ENCODE measurements at regions of chr2 and their contacts with region 1.

Region 1: GRCh38 chr2:28250006-28250405 is 142.7 kb upstream of the FOSL2 start:
- DNase-seq: no peak
- H3K4me3 Mint-ChIP-seq: no peak overlapping the region
- H3K27ac Mint-ChIP-seq: no peak overlapping the region
- H3K4me1 Mint-ChIP-seq: peaks cover 64% of the 10 kb centered on the region
- H3K27me3 Mint-ChIP-seq: no peaks in the 10 kb centered on the region

Region 2: GRCh38 chr2:27723372-27724144 is 526.4 kb before region 1 on chr2:
- intact Hi-C with region 1: loop called (anchors 5 kb)
- DNase-seq: no peak
- H3K4me3 Mint-ChIP-seq: no peak overlapping the region
- H3K27ac Mint-ChIP-seq: no peak overlapping the region
- H3K4me1 Mint-ChIP-seq: peaks cover 40% of the 10 kb centered on the region
- H3K27me3 Mint-ChIP-seq: peaks cover 3% of the 10 kb centered on the region

Region 3: DNA sequence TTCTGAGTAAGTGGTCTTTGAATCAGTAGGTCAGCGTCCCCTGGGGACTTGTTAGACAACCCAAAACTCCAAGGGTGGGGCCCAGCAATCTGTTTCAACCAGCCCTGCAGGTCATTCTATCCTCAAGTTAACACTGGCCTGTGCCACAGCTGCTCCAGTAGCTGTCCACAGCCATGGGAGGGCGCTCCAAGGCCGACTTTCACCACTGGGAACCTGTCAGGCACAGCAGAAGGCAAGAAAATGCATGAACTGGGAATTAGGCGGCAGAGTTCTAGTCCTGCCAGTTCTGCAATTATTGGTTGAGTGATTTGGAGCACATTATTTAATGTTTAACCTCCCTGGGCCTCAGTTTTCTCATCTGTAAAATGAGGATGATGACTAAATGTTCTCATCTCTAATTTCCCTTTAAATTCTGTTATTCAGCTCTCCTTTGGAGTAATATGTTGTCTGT is 495.8 kb before region 1 on chr2:
- intact Hi-C with region 1: loop called (anchors 1 kb)
- DNase-seq: peak; percentile 62
- H3K4me3 Mint-ChIP-seq: no peak overlapping the region
- H3K27ac Mint-ChIP-seq: no peak overlapping the region
- H3K4me1 Mint-ChIP-seq: no peaks in the 10 kb centered on the region
- H3K27me3 Mint-ChIP-seq: peaks cover 4% of the 10 kb centered on the region

Region 4: GRCh38 chr2:27771548-27772335 is 478.3 kb before region 1 on chr2 and contains the start of gene MRPL33:
- intact Hi-C with region 1: loop called (anchors 2 kb)
- DNase-seq: peak; percentile 86
- H3K4me3 Mint-ChIP-seq: peak within 1 kb of the TSS; percentile 99
- H3K27ac Mint-ChIP-seq: peak within 1 kb of the TSS; percentile 96
- H3K4me1 Mint-ChIP-seq: peaks cover 47% of the 10 kb centered on the region
- H3K27me3 Mint-ChIP-seq: no peaks in the 10 kb centered on the region
- total RNA-seq, gene MRPL33: 55.4 and 55.9 TPM in 2 replicates

Region 5: DNA sequence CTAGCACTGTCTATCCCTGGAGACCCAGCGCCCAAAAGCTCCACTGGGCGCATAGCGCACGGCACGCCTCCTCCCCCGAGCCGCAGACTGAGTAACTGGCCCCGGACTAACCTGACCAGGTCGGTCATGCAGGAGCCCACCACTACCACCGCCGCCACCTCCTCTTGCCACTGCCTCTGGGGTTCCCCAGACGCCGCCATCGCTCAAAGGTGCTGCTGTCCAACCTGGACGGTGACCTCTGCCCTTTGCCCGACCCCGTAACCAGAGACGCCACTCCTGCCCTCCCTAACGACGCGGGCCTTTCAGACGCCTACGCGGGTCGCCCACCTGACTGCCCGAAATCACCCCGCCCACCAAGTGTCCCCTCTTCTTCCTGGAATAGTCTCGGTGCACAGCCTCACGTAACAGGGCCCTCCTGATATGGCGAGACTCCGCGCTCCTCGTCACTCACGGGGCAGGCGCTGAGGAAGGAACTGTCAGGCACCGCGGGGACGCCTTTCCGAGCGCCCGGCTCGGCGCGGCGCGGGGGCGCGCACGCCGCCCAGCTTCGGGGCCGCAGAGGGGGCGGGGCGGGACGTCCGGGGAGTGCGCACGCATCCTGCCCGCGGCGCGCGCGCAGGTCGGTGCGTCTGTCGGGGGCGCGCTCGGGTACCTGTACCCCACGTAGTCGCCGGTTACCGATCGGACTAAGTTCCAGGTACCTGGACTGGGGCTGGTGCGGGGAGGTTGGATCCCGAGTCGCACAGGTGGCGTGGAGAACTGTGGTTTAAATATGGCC is 359.7 kb before region 1 on chr2 and contains the starts of genes BABAM2 and RBKS:
- intact Hi-C with region 1: loop called (anchors 5 kb)
- DNase-seq: peak; percentile 88
- H3K4me3 Mint-ChIP-seq: peak within 1 kb of the TSS; percentile 93
- H3K27ac Mint-ChIP-seq: peak within 1 kb of the TSS; percentile 99
- H3K4me1 Mint-ChIP-seq: peaks cover 62% of the 10 kb centered on the region
- H3K27me3 Mint-ChIP-seq: no peaks in the 10 kb centered on the region
- total RNA-seq, gene BABAM2: 46.3 and 46.6 TPM in 2 replicates
- total RNA-seq, gene RBKS: 0.76 and 0.83 TPM in 2 replicates

Region 6: DNA sequence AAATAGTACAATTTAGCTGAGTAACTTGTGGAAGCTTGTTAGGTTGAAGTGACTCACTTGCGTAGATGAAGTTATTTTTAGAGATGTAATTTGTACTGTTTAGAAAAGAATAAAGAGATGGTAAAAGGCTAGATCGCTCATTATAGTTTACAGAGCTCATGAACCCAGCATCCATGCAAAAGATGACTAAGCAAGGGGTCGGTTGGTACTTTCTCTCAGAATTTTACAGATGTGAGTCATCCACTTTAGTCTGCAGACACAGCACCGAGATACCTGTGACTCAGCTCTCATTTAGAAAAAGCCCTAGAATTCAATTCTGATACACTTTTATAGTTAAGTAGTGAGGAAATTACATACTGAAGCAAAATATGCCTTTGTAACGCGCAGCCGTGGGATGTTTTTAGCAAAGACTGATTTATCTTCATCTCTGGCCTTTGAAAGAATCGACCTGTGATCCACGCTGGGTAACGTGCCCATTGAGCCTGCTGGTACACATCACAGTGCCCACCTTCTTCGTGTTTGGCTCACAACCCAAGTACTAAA is 26.1 kb after region 1 on chr2:
- intact Hi-C with region 1: loop called (anchors 1 kb)
- DNase-seq: no peak
- H3K4me3 Mint-ChIP-seq: peak overlapping the region; percentile 41
- H3K27ac Mint-ChIP-seq: peak overlapping the region; percentile 30
- H3K4me1 Mint-ChIP-seq: peaks cover 61% of the 10 kb centered on the region
- H3K27me3 Mint-ChIP-seq: peaks cover 6% of the 10 kb centered on the region

Region 7: DNA sequence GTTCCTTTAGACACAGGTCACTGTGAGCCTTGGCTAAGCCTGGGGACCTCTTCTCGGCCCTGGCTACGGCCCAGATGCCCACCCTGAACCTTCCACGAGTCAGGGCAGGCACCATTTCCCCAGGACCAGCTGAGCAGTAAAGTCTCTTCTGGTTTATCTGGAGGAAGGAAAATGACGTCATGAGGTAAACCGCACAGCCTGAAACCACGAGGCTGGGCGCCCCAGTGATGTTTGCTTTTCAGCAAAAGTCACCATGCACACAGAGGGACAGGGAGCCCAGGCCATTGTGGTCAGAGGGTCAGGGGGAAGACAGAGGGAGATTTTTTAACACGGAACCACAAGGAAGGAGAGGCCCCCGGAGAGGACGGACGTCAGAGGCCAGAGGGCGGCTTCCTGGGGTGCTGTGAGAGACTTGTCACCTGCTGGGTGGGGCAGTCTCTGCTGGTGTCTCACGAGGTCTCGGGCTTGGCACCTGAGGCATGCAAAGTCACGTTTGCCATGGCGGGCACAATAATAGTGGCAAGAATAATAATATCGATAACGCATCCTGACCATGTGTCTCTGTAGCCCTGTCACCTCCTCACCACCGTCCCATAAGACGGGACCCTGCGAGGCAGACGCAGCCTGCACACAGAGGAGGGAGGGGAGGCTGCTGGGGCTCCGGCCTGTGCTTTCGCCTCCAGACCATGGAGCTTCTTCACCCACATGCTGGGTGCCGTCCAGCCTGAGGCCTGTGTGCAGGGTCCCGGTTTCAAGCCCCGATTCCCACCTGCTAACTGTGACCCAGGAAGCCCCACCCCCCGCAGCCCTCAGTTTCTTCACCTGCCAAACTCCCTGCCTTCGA is 109.4 kb after region 1 on chr2:
- intact Hi-C with region 1: loop called (anchors 2 kb)
- DNase-seq: peak; percentile 84
- H3K4me3 Mint-ChIP-seq: peak overlapping the region; percentile 61
- H3K27ac Mint-ChIP-seq: peak overlapping the region; percentile 96
- H3K4me1 Mint-ChIP-seq: peaks cover 44% of the 10 kb centered on the region
- H3K27me3 Mint-ChIP-seq: peaks cover 10% of the 10 kb centered on the region